H1 (cell line): ENCODE measurements at regions of chr6 and their contacts with region 1.

Region 1: DNA sequence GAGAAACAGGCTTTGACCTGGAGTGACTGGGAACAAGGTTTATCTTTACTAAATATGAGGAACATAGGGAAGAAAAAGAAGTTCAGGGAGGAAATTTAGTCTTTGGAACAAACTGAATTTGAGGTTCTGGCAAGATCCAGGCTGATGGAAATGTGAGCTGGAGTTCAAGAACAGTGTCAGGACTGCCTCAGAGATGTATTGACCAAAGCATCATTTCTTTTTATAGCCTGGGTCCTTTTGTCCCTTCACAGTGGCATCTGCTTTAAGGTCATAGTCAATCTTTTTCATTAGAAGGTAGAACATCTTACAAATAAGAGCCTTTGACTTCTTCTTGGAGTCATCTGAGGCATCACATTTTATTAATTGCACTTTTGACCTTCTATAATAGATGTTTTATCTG is 326.5 kb upstream of the QKI start:
- DNase-seq: no peak
- H3K4me3 ChIP-seq: no peak overlapping the region
- H3K27ac ChIP-seq: no peak overlapping the region
- H3K4me1 ChIP-seq: peaks cover 0 to 16% (median 4%) of the 10 kb centered on the region in 4 experiments; a peak in 4 of 7 replicates
- H3K27me3 ChIP-seq: peaks cover 0 to 1% (median 0%) of the 10 kb centered on the region in 4 experiments; a peak in 2 of 7 replicates
- CTCF ChIP-seq: no peak
- EP300 ChIP-seq: no peak
- POLR2A ChIP-seq: no peak
- RAD21 ChIP-seq: no peak

Region 2: DNA sequence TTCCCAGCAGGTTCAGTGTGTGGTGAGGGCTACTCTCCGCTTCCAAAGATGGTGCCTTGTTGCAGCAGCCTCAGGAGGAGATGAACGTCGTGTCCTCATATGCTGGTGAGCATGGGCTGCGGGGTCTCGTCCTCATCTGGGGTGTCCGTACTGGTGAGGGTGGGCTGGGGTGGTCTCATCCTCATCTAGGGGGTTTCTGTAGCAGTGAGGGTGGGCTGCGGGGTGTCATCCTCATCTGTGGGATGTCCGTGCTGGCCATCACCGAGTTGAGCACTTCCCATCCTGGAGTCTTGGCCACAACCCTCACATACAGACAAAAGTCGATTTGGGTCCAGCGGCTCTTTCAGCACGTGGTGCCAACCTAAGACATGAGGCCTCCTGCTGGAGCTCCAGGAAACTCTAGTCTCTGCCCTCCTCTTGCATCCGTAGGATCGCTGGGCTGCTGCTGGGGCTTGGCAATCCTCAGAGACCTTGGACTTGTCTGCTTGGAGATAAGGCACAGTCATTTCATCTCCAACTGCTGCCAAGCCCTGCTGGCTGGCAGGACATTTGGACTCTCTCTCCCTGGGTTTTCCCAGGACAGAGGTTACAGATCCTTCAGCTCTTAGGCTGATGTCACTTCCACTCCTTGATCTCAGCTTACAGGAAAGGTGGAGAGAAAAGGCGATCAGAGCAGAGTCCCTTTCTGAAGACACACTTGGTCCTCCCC is 199.8 kb before region 1 on chr6:
- CTCF ChIA-PET with region 1: no interaction called
- POLR2A ChIA-PET with region 1: no interaction called
- DNase-seq: no peak
- H3K4me3 ChIP-seq: no peak overlapping the region
- H3K27ac ChIP-seq: no peak overlapping the region
- H3K4me1 ChIP-seq: no peaks in the 10 kb centered on the region
- H3K27me3 ChIP-seq: no peaks in the 10 kb centered on the region
- CTCF ChIP-seq: no peak
- EP300 ChIP-seq: no peak
- POLR2A ChIP-seq: no peak
- RAD21 ChIP-seq: no peak

Region 3: GRCh38 chr6:162973151-162973872 is 114.7 kb before region 1 on chr6:
- CTCF ChIA-PET with region 1: no interaction called
- POLR2A ChIA-PET with region 1: no interaction called
- DNase-seq: no peak
- H3K4me3 ChIP-seq: no peak overlapping the region
- H3K27ac ChIP-seq: no peak overlapping the region
- H3K4me1 ChIP-seq: no peaks in the 10 kb centered on the region
- H3K27me3 ChIP-seq: no peaks in the 10 kb centered on the region
- CTCF ChIP-seq: no peak
- EP300 ChIP-seq: no peak
- POLR2A ChIP-seq: no peak
- RAD21 ChIP-seq: no peak

Region 4: GRCh38 chr6:163019926-163020325 is 68.1 kb before region 1 on chr6:
- CTCF ChIA-PET with region 1: no interaction called
- POLR2A ChIA-PET with region 1: no interaction called
- DNase-seq: no peak
- H3K4me3 ChIP-seq: no peak overlapping the region
- H3K27ac ChIP-seq: no peak overlapping the region
- H3K4me1 ChIP-seq: no peaks in the 10 kb centered on the region
- H3K27me3 ChIP-seq: no peaks in the 10 kb centered on the region
- CTCF ChIP-seq: no peak
- EP300 ChIP-seq: no peak
- POLR2A ChIP-seq: no peak
- RAD21 ChIP-seq: no peak

Region 5: GRCh38 chr6:163098827-163099479 is 11.0 kb after region 1 on chr6:
- CTCF ChIA-PET with region 1: interaction called, 10 read pairs
- POLR2A ChIA-PET with region 1: interaction called, 4 read pairs
- DNase-seq: no peak
- H3K4me3 ChIP-seq: peak overlapping the region in 1 of 4 experiments; percentile 14; a peak in 1 of 8 replicates
- H3K27ac ChIP-seq: no peak overlapping the region
- H3K4me1 ChIP-seq: peaks cover 2 to 5% (median 3%) of the 10 kb centered on the region in 4 experiments
- H3K27me3 ChIP-seq: no peaks in the 10 kb centered on the region
- CTCF ChIP-seq: no peak
- EP300 ChIP-seq: no peak
- POLR2A ChIP-seq: no peak
- RAD21 ChIP-seq: no peak